H1 (cell line): ENCODE measurements at regions of chr17 and their contacts with region 1.

Region 1: DNA sequence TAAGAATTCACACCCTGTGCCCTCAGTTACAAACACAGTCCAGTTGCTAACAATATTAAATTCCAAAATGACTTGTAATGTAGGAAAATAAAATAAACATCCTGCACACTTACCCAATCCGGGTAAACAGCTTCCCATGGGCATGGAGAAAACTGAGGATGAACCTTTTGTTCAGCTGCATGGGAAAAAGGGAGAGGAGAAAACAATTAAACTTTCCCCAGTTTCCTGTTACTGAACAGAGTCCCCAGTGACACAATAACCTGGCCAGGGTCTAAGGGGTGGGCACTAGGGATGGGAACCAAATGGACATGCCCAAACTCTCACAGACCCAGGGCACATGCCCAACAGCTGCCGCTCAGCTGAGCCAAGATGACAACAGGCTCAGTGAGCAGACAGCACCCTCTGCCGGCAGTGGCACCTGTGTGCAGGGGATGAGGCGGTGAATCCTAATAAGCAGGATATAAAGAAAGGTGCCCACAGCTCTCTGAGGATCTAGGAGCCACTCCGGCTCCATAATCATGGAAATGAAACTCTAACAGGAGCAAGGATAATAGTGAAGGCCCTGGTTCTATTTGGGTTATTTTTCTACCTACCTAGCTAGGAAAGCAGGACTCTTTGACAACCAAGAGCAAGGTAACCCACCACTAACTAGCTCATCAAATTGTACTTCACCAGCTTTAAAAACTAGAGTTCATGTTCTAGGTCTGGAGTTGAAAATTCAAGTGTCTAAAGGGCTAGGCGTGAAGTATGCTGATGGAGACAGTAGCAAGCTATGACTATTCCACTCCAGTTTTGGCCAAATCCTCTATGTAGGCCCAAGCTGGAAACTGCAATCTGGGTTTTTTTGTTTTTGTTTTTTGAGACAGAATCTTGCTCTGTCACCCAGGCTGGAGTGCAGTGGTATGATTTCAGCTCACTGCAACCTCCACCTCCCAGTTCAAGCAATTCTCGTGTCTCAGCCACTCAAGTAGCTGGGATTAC is 58.8 kb downstream of the SMG6 start:
- DNase-seq: peak; percentile 50 to 90
- H3K4me3 ChIP-seq: no peak overlapping the region
- H3K27ac ChIP-seq: no peak overlapping the region
- H3K4me1 ChIP-seq: no peaks in the 10 kb centered on the region
- H3K27me3 ChIP-seq: no peaks in the 10 kb centered on the region
- CTCF ChIP-seq: peak; percentile 97 to 100 (median 99)
- EP300 ChIP-seq: no peak
- POLR2A ChIP-seq: no peak
- RAD21 ChIP-seq: peak; percentile 99

Region 2: DNA sequence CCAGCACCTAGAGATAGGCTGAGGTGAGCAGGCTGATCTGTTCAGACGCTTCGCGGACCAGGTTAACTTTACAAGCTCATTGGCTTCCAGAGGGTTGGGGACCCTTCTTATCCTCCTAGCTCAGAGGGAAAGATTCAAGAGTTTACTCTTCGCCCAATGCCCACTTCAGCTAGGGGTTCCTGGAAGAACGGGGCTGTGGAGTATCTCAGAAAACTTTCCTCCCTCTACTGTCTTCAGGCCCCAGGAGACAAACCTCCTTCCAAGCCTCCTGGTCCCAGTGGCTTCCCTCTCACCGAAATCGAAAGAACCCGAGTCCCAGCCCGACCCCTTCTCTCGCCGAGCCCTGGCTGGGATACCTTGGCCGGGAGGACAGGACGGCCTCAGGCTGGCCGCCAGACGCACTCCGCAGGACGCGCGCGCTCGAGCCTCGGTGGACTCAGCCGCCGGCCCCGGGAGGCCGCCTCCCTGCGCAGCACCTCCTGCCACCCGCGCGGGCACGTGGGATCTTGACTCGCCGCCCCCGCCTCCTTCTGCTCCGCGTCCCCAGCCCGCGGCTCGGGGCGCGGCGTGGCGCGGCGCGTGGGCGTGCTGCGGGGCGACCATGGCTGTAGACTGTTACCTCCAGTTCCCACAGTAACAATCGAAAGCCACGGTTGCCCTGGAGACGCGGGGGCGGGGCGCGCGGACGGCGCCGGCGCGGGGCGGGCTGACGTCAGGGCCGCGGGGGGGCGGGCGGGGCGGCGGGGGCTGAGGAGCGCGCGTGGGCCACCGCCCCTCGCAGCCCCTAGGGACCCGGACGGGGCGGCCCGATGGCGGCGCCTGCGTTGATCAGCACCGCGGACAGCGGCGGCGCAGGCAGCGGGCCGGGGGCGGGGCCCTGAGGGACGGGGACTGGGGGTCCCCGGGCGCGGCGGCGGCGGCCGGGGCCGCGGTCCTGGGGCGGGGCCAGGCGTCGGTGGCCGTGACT is 195.2 kb before region 1 on chr17:
- CTCF ChIA-PET with region 1: interaction called, 121 read pairs
- POLR2A ChIA-PET with region 1: no interaction called
- DNase-seq: peak in 1 of 2 experiments; percentile 88
- H3K4me3 ChIP-seq: peak overlapping the region in 2 of 4 experiments; percentile 17 to 58; a peak in 5 of 8 replicates
- H3K27ac ChIP-seq: no peak overlapping the region
- H3K4me1 ChIP-seq: peaks cover 0 to 6% (median 3%) of the 10 kb centered on the region in 4 experiments; a peak in 5 of 7 replicates
- H3K27me3 ChIP-seq: peaks cover 44 to 67% (median 64%) of the 10 kb centered on the region in 4 experiments
- CTCF ChIP-seq: no peak
- EP300 ChIP-seq: no peak
- POLR2A ChIP-seq: no peak
- RAD21 ChIP-seq: no peak

Region 3: DNA sequence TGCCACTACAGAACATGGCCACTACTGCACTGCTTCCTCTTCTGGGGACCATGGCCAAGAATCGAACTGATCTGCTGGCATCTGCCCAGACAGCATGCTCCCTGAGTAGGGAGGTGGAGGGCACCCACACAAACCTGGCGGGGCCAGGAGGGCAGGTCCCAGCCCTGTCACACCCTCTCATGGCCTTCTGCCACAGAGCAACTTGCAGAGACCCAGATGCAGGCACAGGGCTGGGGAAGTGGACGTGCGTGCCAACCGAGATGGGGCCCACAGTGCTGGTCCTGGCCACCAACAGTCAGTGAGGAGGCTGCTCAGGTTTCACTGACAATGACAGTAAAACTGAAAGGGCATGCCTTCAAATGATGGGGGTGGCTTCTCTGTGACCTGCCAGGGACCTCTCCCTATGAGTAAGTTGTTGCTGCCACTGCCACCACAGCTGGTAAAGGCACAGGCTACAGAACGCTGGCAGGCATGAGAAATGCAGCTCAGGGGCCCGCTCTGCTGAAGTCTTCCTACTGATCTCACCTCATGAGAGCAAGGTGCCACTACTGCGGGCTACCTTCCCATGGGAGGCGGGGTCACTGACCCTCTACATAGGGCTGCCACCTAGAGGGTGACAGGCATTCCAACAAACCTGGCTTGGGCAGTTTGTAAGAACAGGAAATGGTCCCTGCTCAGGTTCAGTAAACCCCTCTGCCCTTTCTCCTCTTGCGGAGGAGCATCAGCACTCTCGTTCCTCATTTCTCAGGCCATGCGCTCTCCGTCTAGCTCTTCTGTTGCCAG is 174.4 kb before region 1 on chr17:
- CTCF ChIA-PET with region 1: interaction called, 58 read pairs
- POLR2A ChIA-PET with region 1: interaction called, 4 read pairs
- DNase-seq: no peak
- H3K4me3 ChIP-seq: no peak overlapping the region
- H3K27ac ChIP-seq: no peak overlapping the region
- H3K4me1 ChIP-seq: peaks cover under 1 to 14% (median 5%) of the 10 kb centered on the region in 4 experiments; a peak in 6 of 7 replicates
- H3K27me3 ChIP-seq: no peaks in the 10 kb centered on the region
- CTCF ChIP-seq: peak; percentile 26 to 53 (median 44)
- EP300 ChIP-seq: no peak
- POLR2A ChIP-seq: no peak
- RAD21 ChIP-seq: peak; percentile 17 to 42; a peak in 2 of 4 replicates

Region 4: DNA sequence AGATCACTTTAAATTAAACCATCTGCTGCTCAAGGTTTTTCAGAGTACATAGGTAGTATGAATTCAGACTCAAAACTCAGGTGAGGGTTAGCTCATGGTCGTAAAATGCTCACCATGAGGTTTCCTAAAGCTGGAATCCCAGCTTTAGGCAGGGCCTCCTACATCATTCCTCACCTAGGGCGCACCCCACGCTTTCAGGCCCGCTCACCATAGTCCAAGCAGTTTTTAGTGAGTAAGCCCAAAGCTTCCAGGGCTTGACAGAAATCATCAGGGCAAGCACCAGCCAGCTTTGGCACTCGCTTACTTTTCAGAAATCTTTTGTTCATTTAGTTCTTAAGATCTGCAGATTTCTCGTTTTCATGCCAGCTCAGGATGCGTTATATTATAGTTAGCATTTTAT is 100.1 kb before region 1 on chr17:
- CTCF ChIA-PET with region 1: interaction called, 10 read pairs
- POLR2A ChIA-PET with region 1: no interaction called
- DNase-seq: no peak
- H3K4me3 ChIP-seq: no peak overlapping the region
- H3K27ac ChIP-seq: no peak overlapping the region
- H3K4me1 ChIP-seq: peaks cover 0 to 2% (median 0%) of the 10 kb centered on the region in 4 experiments; a peak in 1 of 7 replicates
- H3K27me3 ChIP-seq: no peaks in the 10 kb centered on the region
- CTCF ChIP-seq: no peak
- EP300 ChIP-seq: no peak
- POLR2A ChIP-seq: no peak
- RAD21 ChIP-seq: no peak

Region 5: DNA sequence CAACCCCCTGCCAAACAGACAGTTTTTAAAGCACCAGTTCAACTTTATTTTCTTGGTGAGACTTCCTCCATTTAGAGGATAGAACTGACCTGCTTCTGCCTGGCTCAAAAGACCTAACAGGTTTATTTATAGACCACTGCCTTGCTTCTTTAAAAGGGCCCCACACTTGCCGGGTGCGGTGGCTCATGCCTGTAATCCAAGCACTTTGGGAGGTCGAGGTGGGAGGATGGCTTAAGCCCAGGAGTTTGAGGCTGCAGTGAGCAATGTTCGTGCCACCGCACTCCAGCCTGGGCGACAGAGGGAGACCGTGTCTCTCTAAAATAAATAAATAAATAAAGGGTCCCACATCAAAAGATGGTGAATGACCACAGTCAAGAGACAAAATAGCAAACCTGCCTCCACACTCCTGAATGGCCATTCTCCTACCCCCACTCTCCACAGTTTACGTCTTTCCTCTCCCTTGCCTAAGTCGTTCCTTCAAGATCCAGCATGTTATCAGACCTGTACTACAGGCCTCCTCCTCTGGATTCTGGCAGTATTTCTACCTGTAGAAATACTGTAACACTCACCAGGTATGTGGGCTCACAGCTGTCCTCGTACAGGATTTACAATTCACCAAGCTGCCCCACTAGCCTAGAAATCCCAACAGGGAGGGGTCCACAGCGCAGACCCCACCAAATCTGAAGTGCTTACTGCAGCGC is 36.9 kb before region 1 on chr17:
- CTCF ChIA-PET with region 1: interaction called, 10 read pairs
- POLR2A ChIA-PET with region 1: no interaction called
- DNase-seq: no peak
- H3K4me3 ChIP-seq: no peak overlapping the region
- H3K27ac ChIP-seq: no peak overlapping the region
- H3K4me1 ChIP-seq: peaks cover 0 to 3% (median 0%) of the 10 kb centered on the region in 4 experiments; a peak in 1 of 7 replicates
- H3K27me3 ChIP-seq: no peaks in the 10 kb centered on the region
- CTCF ChIP-seq: no peak
- EP300 ChIP-seq: no peak
- POLR2A ChIP-seq: no peak
- RAD21 ChIP-seq: no peak

Region 6: DNA sequence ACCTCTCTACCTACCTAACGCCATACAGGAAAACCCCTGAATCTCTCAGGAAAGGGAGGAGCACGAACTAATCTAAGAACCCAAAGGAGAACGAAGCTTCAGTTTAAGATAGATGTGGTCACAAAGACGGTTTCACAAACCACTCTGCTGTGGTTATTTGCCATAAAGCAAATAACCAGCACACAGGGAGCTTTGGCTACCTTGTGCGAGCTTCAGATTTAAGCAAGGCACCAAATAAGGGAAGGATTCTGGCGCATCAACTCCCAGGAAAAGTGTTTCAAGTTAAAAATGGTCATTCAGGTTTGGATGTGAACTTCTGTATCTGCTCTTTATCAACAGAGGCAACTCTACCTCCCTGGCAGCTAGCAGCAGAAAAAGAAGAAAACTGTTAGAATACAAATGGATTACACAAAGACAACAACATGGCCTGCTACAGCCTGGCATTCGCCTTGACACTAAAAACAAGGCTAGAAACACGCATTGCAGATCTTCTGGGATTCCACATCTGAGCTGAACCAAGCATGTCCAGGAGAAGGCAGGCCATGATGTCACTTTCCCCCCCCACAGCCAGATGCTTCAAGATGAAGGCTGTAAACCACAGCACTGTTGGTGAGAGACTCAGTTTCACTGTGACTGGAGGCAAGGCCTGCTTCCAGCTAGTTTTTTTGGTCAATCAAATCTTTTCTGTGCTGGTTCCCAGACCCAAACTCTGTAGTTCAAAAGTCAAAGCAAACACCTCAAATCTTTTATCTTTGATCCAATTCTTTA is 15.1 kb after region 1 on chr17:
- CTCF ChIA-PET with region 1: interaction called, 19 read pairs
- POLR2A ChIA-PET with region 1: no interaction called
- DNase-seq: no peak
- H3K4me3 ChIP-seq: no peak overlapping the region
- H3K27ac ChIP-seq: no peak overlapping the region
- H3K4me1 ChIP-seq: no peaks in the 10 kb centered on the region
- H3K27me3 ChIP-seq: no peaks in the 10 kb centered on the region
- CTCF ChIP-seq: no peak
- EP300 ChIP-seq: no peak
- POLR2A ChIP-seq: no peak
- RAD21 ChIP-seq: no peak

Region 7: GRCh38 chr17:2299136-2299535 is 54.3 kb after region 1 on chr17:
- CTCF ChIA-PET with region 1: no interaction called
- POLR2A ChIA-PET with region 1: no interaction called
- DNase-seq: no peak
- H3K4me3 ChIP-seq: no peak overlapping the region
- H3K27ac ChIP-seq: no peak overlapping the region
- H3K4me1 ChIP-seq: peaks cover 0 to 2% (median 0%) of the 10 kb centered on the region in 4 experiments; a peak in 2 of 7 replicates
- H3K27me3 ChIP-seq: no peaks in the 10 kb centered on the region
- CTCF ChIP-seq: no peak
- EP300 ChIP-seq: no peak
- POLR2A ChIP-seq: no peak
- RAD21 ChIP-seq: no peak

Region 8: DNA sequence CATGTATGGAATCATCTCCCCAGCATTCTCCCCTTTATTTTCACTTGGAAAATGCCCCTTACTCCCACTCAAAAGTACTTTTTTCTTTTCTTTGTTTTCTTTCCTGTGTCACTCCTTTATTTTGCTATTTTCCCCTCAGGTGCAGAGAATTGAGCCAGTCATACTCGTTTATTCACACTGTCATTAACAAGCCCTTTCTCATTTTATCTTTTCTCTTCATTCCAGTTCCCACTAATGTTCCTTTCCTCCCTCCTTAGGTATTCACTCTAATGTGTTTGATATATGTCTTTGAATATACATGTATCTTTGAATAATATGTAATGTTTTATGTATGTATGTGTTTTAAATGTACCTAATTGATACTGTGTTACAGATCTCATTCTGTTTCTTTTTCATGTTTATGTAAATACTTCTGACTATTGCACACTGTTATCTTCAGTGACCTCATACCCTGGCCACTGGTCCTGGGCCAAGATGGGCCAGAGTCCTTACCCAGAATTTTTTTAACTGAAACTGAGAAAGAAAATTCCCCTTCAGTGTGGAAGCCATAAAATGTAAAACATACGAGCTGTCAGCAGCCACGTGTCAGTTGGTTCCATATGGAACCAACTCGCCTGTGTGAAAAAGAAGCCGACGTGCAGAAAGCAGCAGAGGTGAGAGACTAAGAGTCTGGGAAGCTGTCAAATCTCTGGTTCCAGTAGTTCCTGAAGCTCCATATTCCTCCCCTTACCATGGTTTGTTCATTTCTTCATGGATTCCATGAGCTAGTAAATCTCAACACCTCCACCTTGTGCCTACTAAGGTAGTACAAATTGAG is 64.7 kb after region 1 on chr17:
- CTCF ChIA-PET with region 1: no interaction called
- POLR2A ChIA-PET with region 1: no interaction called
- DNase-seq: no peak
- H3K4me3 ChIP-seq: no peak overlapping the region
- H3K27ac ChIP-seq: no peak overlapping the region
- H3K4me1 ChIP-seq: no peaks in the 10 kb centered on the region
- H3K27me3 ChIP-seq: no peaks in the 10 kb centered on the region
- CTCF ChIP-seq: no peak
- EP300 ChIP-seq: no peak
- POLR2A ChIP-seq: no peak
- RAD21 ChIP-seq: no peak

Region 9: GRCh38 chr17:2331303-2331702 is 86.5 kb after region 1 on chr17:
- CTCF ChIA-PET with region 1: no interaction called
- POLR2A ChIA-PET with region 1: no interaction called
- DNase-seq: no peak
- H3K4me3 ChIP-seq: no peak overlapping the region
- H3K27ac ChIP-seq: no peak overlapping the region
- H3K4me1 ChIP-seq: peaks cover 3 to 18% (median 9%) of the 10 kb centered on the region in 4 experiments; a peak in 6 of 7 replicates
- H3K27me3 ChIP-seq: no peaks in the 10 kb centered on the region
- CTCF ChIP-seq: no peak
- EP300 ChIP-seq: no peak
- POLR2A ChIP-seq: peak; percentile 35 to 49
- RAD21 ChIP-seq: no peak